OCI-LY7 (cell line): ENCODE measurements at regions of chr9 and their contacts with region 1.

Region 1: GRCh38 chr9:108621991-108622855 is 233.6 kb downstream of the ACTL7B start:
- DNase-seq: no peak
- H3K4me3 ChIP-seq: no peak overlapping the region
- H3K27ac ChIP-seq: no peak overlapping the region
- H3K4me1 ChIP-seq: no peaks in the 10 kb centered on the region
- CTCF ChIP-seq: no peak

Region 2: GRCh38 chr9:108643731-108644510 is 21.7 kb after region 1 on chr9:
- CTCF ChIA-PET with region 1: no interaction called
- POLR2A ChIA-PET with region 1: interaction called, 10 read pairs
- intact Hi-C with region 1: no loop called
- DNase-seq: no peak
- H3K4me3 ChIP-seq: no peak overlapping the region
- H3K27ac ChIP-seq: no peak overlapping the region
- H3K4me1 ChIP-seq: no peaks in the 10 kb centered on the region
- CTCF ChIP-seq: no peak